ENCODE measurements at regions of chr14 and their contacts with region 1.

Region 1: DNA sequence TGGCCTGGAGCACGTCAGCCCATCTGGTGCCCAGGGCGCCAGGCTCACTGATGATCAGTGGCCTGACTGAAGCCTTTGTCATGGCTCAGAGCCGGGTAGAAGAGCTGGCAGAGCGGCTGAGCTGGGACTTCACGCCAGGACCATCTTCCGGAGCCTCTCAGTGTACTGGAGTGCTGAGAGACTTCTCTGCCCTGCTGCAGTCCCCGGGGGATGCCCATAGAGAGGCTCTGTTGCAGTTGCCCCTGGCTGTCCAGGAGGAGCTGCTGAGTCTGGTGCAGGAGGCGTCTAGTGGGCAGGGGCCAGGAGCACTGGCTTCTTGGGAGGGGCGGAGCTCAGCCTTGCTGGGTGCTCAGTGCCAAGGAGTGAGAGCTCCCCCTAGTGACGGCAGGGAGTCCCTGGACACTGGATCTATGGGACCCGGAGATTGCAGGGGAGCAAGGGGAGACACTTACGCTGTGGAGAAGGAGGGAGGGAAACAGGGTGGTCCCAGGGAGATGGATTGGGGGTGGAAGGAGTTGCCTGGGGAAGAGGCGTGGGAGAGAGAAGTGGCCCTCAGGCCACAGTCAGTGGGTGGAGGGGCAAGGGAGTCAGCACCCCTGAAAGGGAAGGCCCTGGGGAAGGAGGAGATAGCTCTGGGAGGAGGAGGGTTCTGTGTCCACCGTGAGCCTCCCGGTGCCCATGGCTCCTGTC is 2.0 kb downstream of the KHNYN start:
- DNase-seq: peak; percentile 90 to 94 (median 91)
- ATAC-seq: peak; percentile 67 to 76 (median 69)
- H3K4me3 ChIP-seq: peak overlapping the region; percentile 61 to 84 (median 82)
- H3K27ac ChIP-seq: peak overlapping the region in 2 of 3 donors; percentile 95 to 99
- H3K4me1 ChIP-seq: peaks cover 0 to 36% (median 14%) of the 10 kb centered on the region in 4 donors
- H3K27me3 ChIP-seq: no peaks in the 10 kb centered on the region
- CTCF ChIP-seq: peak; percentile 90 to 94 (median 92)
- POLR2A ChIP-seq: no peak

Region 2: DNA sequence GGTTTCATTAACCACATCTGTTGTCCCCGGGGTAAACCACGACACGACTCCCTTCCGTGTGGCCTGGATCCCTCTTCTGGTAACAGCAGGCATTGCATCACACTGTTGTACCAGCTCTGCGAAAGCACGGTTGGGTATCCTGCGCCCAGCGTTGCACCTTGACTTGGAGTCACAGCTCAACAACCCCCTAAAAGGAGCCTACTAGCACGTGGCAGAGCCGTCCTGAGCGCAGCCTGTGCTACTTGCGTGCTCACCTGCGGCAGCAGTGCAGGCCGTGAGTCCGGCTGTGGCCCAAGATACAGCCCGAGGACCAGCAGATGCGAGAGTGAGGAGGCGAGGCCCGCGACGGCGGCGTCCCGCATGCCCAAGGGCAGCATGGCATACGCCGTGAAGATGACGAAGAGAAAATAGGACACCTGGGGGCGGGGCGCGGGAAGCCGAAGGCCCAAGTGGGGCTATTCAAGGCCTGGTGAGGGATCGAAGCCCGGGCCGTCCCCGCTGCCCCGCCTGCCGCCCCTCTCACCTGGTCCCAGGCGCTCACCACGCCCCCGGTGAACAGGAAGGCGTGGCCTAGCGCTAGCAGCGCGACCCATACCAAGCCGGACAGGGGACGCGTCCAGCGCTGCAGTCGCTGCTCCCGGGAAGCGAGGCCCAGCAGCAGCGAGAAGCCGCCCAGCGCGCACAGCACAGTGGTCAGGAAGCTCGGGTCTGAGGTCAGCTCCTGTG is 99.3 kb before region 1 on chr14:
- intact Hi-C with region 1: loop called (anchors 5 kb)
- DNase-seq: peak; percentile 71 to 78 (median 73)
- ATAC-seq: peak; percentile 73 to 80 (median 78)
- H3K4me3 ChIP-seq: peak overlapping the region; percentile 3 to 31 (median 21)
- H3K27ac ChIP-seq: no peak overlapping the region
- H3K4me1 ChIP-seq: peaks cover 0 to 24% (median 8%) of the 10 kb centered on the region in 4 donors
- H3K27me3 ChIP-seq: no peaks in the 10 kb centered on the region
- CTCF ChIP-seq: peak; percentile 56 to 68 (median 64)
- POLR2A ChIP-seq: no peak

Region 3: DNA sequence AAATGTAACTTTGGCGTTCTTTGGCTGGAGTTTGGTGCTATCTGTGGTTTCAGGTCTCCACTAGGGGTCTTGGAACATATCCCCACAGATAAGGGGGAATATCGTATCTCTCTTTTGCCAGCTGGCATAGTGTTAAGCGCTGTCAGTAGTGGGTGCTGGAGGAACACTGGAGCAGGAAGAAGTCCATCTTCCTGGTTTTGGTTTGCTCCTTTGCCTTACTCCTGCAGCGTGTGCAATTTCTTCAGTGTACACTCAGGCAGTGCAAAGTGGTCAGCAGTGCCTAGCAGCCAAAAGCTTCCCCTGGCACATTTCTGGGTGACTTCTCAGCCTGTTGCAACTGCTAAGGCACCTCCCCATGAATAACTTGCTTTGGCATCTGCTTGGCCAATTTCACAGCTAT is 80.2 kb before region 1 on chr14:
- intact Hi-C with region 1: no loop called
- DNase-seq: no peak
- ATAC-seq: peak; percentile 39 to 67 (median 54)
- H3K4me3 ChIP-seq: no peak overlapping the region
- H3K27ac ChIP-seq: no peak overlapping the region
- H3K4me1 ChIP-seq: peaks cover 0 to 4% (median 0%) of the 10 kb centered on the region in 4 donors
- H3K27me3 ChIP-seq: no peaks in the 10 kb centered on the region
- CTCF ChIP-seq: no peak
- POLR2A ChIP-seq: no peak

Region 4: DNA sequence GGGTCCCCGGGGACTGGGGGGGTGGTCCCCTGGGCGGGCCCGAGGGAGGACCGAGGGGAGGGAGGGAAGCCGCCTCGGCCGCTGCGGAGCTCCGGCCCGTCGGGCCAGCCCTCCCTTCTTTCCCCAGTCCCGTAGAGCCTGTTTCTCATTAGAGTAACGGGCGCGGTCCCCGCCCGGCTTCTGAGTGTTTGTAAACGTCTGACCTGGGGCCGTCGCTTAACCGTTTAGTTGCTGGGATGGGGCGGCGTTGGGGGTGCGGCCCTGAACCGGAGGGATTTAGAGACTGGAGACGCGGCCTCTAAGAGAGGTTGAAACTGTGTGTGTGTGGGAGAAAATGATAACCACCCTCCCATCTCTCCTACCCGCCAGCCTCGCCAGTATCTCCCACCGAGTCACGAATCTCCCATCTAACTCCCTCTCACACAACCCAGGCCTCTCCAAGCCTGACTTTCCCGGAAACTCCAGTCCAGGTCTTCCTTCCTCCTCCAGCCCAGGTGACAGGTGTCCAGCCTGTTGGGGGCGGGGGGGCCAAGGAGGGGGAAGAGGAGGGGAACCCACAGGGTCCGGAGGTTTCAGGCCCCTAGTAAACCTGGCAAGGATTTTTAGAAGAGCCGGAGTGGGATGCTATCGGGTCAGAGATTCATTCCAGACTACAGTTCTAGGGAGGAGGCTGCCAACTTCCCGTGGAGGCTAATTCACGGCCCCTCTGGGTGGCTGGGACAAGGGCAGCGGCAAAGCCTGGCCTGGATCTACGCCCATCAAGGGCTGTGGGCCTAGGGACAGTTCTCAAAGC is 64.8 kb before region 1 on chr14:
- intact Hi-C with region 1: loop called (anchors 5 kb)
- DNase-seq: peak in 2 of 3 donors; percentile 51 to 58
- ATAC-seq: peak; percentile 37 to 52 (median 46)
- H3K4me3 ChIP-seq: peak overlapping the region in 2 of 3 donors; percentile 16
- H3K27ac ChIP-seq: peak overlapping the region; percentile 14 to 35 (median 33)
- H3K4me1 ChIP-seq: no peaks in the 10 kb centered on the region
- H3K27me3 ChIP-seq: no peaks in the 10 kb centered on the region
- CTCF ChIP-seq: no peak
- POLR2A ChIP-seq: no peak

Measured in right lobe of liver (tissue), 6 donors.